PC-3 (cell line): ENCODE measurements at regions of chr11 and their contacts with region 1.

Region 1: GRCh38 chr11:122101625-122102291 is 14.3 kb downstream of the BLID start:
- DNase-seq: no peak
- ATAC-seq: peak; percentile 32
- H3K4me3 ChIP-seq: no peak overlapping the region
- H3K27ac ChIP-seq: peak overlapping the region; percentile 53
- H3K4me1 ChIP-seq: peaks cover 91% of the 10 kb centered on the region
- H3K27me3 ChIP-seq: no peaks in the 10 kb centered on the region
- CTCF ChIP-seq: peak; percentile 51

Region 2: GRCh38 chr11:121892131-121892681 is 209.6 kb before region 1 on chr11:
- CTCF ChIA-PET with region 1: no interaction called
- POLR2A ChIA-PET with region 1: no interaction called
- intact Hi-C with region 1: loop called (anchors 10 kb)
- DNase-seq: peak; percentile 42
- ATAC-seq: no peak
- H3K4me3 ChIP-seq: no peak overlapping the region
- H3K27ac ChIP-seq: no peak overlapping the region
- H3K4me1 ChIP-seq: peaks cover 61% of the 10 kb centered on the region
- H3K27me3 ChIP-seq: no peaks in the 10 kb centered on the region
- CTCF ChIP-seq: no peak

Region 3: GRCh38 chr11:122032317-122032716 is 69.4 kb before region 1 on chr11:
- CTCF ChIA-PET with region 1: no interaction called
- POLR2A ChIA-PET with region 1: no interaction called
- intact Hi-C with region 1: no loop called
- DNase-seq: no peak
- ATAC-seq: no peak
- H3K4me3 ChIP-seq: no peak overlapping the region
- H3K27ac ChIP-seq: no peak overlapping the region
- H3K4me1 ChIP-seq: no peaks in the 10 kb centered on the region
- H3K27me3 ChIP-seq: no peaks in the 10 kb centered on the region
- CTCF ChIP-seq: no peak

Region 4: DNA sequence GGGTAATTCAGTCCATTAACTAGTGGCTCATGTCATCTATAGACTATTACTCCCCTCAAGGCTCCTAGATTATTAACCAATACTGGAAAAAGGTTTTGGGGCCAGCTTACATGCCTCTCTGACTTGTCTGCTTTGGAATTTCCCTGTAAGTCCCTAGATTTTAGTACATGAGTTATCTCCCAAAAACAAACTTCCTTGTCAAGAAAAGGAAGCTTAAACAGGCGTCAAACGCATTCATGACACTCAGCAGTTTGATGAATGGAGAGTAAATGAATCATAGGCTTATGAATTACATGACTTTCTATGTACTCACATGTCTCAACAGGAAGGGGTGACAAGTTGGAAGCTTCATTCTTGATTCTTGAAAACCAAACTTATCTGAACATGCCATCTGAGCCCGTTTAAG is 56.6 kb before region 1 on chr11:
- CTCF ChIA-PET with region 1: no interaction called
- POLR2A ChIA-PET with region 1: interaction called, 13 read pairs
- intact Hi-C with region 1: no loop called
- DNase-seq: peak; percentile 92
- ATAC-seq: peak; percentile 76
- H3K4me3 ChIP-seq: no peak overlapping the region
- H3K27ac ChIP-seq: peak overlapping the region; percentile 80
- H3K4me1 ChIP-seq: peaks cover 41% of the 10 kb centered on the region
- H3K27me3 ChIP-seq: no peaks in the 10 kb centered on the region
- CTCF ChIP-seq: no peak

Region 5: GRCh38 chr11:122062763-122063162 is 39.0 kb before region 1 on chr11:
- CTCF ChIA-PET with region 1: no interaction called
- POLR2A ChIA-PET with region 1: no interaction called
- intact Hi-C with region 1: no loop called
- DNase-seq: no peak
- ATAC-seq: no peak
- H3K4me3 ChIP-seq: no peak overlapping the region
- H3K27ac ChIP-seq: no peak overlapping the region
- H3K4me1 ChIP-seq: no peaks in the 10 kb centered on the region
- H3K27me3 ChIP-seq: peaks cover 6% of the 10 kb centered on the region; the same call in 1 of the 2 replicates
- CTCF ChIP-seq: no peak

Region 6: DNA sequence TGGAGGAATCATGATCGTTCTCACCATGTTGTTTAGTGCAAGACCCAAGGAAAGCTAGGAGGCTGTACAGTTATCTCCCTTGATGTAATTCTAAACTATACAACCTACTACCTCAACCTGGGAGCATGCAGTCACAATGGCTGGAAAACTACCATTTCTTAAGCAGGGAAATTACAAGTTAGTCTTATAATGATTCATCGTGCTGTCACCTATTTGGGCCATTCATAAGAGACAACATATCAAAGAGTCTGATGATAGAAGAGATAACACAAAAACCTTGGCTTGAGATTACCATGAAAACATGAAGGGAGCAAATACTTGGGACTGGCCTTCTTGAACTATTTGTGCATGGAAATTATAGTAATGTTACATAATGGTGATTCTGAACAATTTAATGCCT is 44.7 kb after region 1 on chr11:
- CTCF ChIA-PET with region 1: no interaction called
- POLR2A ChIA-PET with region 1: interaction called, 23 read pairs
- intact Hi-C with region 1: loop called (anchors 2 kb)
- DNase-seq: peak; percentile 92
- ATAC-seq: peak; percentile 26
- H3K4me3 ChIP-seq: 0 out of 2 replicates have a peak overlapping the region, but pooled peaks have one; percentile 11
- H3K27ac ChIP-seq: peak overlapping the region; percentile 99
- H3K4me1 ChIP-seq: peaks cover 100% of the 10 kb centered on the region
- H3K27me3 ChIP-seq: no peaks in the 10 kb centered on the region
- CTCF ChIP-seq: no peak

Region 7: DNA sequence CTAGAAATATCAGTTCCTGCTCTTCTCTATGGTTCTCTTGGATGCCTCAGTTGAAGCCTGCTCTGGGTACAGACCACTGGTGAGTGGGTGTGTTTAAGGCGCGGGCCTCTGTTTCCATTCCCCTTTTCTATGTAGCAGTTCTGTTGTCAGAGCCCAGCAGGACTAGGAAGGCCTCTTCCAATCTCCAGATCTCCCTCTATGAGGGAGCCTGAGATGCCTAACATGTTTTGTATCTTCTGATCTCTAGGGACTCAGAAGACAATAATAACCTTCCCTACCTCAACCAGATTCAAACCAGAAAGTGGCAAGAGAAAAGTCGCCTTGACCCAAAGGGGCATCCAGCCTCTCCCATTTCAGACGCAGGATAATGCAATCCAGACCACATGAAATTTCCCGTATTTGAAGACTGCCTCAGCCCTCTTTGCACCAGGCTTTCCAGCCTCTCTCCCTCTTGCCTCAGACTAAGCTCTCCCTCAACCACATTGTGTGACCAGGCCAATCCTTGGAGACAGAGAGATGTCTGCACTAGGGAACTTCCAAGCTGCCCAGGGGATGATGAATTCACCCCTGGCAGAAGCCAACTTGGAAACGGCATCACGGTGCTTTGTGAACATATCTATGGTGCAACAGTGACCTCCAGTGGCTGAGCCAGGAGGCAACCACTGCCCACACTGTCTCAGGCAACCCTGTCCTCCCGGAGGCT is 403.7 kb after region 1 on chr11:
- CTCF ChIA-PET with region 1: no interaction called
- POLR2A ChIA-PET with region 1: no interaction called
- intact Hi-C with region 1: loop called (anchors 5 kb)
- DNase-seq: peak; percentile 92
- ATAC-seq: peak; percentile 100
- H3K4me3 ChIP-seq: no peak overlapping the region
- H3K27ac ChIP-seq: no peak overlapping the region
- H3K4me1 ChIP-seq: no peaks in the 10 kb centered on the region
- H3K27me3 ChIP-seq: peaks cover 81% of the 10 kb centered on the region
- CTCF ChIP-seq: peak; percentile 95